ENCODE measurements at regions of chr14 and their contacts with region 1.

Region 1: GRCh38 chr14:45705940-45706534 is 453.0 kb upstream of the MIS18BP1 start:
- DNase-seq: no peak
- H3K4me3 Mint-ChIP-seq: no peak overlapping the region
- H3K27ac Mint-ChIP-seq: no peak overlapping the region
- H3K4me1 Mint-ChIP-seq: no peaks in the 10 kb centered on the region
- H3K27me3 Mint-ChIP-seq: no peaks in the 10 kb centered on the region

Region 2: GRCh38 chr14:45785240-45785639 is 79.2 kb after region 1 on chr14:
- intact Hi-C with region 1: loop called (anchors 2 kb)
- DNase-seq: no peak
- H3K4me3 Mint-ChIP-seq: no peak overlapping the region
- H3K27ac Mint-ChIP-seq: no peak overlapping the region
- H3K4me1 Mint-ChIP-seq: no peaks in the 10 kb centered on the region
- H3K27me3 Mint-ChIP-seq: no peaks in the 10 kb centered on the region